ENCODE measurements at regions of chr1 and their contacts with region 1.

Region 1: DNA sequence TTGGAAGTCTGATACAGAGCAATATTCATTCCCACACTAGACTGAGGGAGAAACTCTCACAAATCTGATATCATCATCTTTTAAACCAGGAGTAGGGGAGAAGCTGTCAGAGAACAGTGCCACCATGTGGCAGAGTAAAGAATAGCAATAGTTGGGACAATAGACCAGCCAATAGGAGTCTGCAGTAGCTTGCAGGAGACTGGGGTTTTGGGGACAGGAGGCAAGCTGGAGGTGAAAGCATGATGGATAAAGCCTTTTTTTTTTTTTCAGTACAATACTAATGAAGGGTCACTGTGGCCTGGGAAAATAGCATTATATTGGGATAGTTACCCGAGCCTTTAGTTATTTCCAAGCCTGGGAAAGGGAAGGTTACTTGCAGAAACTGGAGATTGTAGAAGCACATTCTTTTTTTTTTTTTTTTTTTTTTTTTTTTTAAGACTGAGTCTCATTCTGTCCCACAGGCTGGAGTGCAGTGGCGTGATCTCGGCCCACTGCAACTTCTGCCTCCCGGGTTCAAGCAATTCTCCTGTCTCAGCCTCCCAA is 120.7 kb downstream of the S1PR1 start:
- DNase-seq: peak; percentile 52 to 89
- H3K4me3 ChIP-seq: no peak overlapping the region
- H3K27ac ChIP-seq: no peak overlapping the region
- H3K4me1 ChIP-seq: no peaks in the 10 kb centered on the region
- H3K27me3 ChIP-seq: no peaks in the 10 kb centered on the region
- CTCF ChIP-seq: peak in 5 of 7 experiments; percentile 49 to 85 (median 75)
- EP300 ChIP-seq: no peak
- POLR2A ChIP-seq: no peak

Region 2: DNA sequence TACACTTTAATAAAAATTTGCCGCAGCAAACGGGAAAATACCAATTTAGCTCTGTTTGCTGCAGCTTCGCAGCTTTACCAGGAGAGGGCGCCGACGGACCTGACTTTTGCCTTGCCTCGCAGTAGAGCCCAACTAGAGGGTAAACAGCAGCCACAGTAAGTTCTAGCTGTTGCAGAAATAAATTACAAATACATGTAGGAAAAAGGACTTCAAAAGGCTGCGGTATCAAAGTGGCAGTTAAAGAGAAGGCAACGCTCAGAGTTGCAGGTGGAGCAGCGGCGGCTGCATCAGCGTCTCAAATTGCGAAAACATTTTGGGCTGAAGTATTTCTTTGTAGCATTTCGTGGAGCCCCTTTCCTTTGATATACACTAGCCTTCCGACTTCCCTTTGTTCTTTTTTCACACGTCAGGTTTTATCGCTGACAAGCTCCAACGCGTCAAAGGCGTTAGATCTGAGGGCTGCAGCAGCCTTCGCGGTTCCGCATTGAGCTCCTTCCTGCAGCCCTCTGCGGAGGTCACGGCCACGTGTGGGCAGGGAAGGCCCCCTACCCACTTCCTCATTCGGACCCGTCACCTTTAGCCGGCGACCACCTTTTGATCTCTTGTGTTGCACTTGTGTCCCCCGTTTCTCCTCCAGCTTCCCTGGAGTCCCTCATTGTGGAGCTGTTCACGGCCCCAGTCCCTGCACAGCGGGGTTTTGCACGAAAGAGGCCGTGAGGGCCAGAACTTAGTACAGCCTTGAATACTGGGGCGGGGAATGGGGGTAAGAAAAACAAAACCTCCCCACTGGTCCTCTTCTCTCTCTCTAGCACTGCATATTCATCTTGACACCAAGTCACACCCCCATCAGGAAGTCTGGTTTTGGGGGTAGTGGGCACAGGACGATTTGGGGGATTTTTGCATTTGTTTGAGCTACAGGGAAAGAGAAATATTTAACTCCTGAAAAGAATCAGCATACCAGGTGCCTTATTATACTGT is 47.9 kb before region 1 on chr1:
- intact Hi-C with region 1: loop called (anchors 5 kb)
- DNase-seq: peak; percentile 60 to 88
- H3K4me3 ChIP-seq: peak overlapping the region; percentile 29 to 48 (median 36)
- H3K27ac ChIP-seq: peak overlapping the region in 2 of 5 donors; percentile 6 to 43
- H3K4me1 ChIP-seq: peaks cover 4 to 17% (median 11%) of the 10 kb centered on the region in 4 donors
- H3K27me3 ChIP-seq: no peaks in the 10 kb centered on the region
- CTCF ChIP-seq: peak in 5 of 7 experiments; percentile 29 to 77 (median 74)
- EP300 ChIP-seq: no peak
- POLR2A ChIP-seq: no peak

Region 3: GRCh38 chr1:101453844-101454243 is 96.3 kb after region 1 on chr1:
- intact Hi-C with region 1: no loop called
- DNase-seq: no peak
- H3K4me3 ChIP-seq: no peak overlapping the region
- H3K27ac ChIP-seq: no peak overlapping the region
- H3K4me1 ChIP-seq: no peaks in the 10 kb centered on the region
- H3K27me3 ChIP-seq: no peaks in the 10 kb centered on the region
- CTCF ChIP-seq: no peak
- EP300 ChIP-seq: no peak
- POLR2A ChIP-seq: no peak

Region 4: DNA sequence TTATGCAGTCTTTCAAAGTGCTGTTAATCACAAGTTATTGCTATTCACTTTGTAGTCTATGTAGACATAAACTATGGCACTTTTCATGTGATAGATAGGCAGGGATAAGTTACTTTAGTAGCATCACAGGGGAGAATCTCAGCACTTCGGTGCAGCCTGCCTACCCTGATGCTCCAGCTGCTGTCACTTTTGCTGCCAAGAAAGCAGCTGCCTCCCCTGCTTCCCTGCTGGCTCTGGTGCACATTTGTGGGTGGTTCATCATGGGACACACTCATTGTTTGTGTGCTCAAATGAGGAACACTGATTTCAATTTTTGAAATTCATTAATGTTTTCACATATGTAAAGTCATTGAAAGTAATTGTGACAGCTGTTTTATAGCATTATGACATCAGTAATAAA is 151.9 kb after region 1 on chr1:
- intact Hi-C with region 1: no loop called
- DNase-seq: peak in 1 of 2 donors; percentile 18
- H3K4me3 ChIP-seq: no peak overlapping the region
- H3K27ac ChIP-seq: no peak overlapping the region
- H3K4me1 ChIP-seq: no peaks in the 10 kb centered on the region
- H3K27me3 ChIP-seq: no peaks in the 10 kb centered on the region
- CTCF ChIP-seq: no peak
- EP300 ChIP-seq: no peak
- POLR2A ChIP-seq: no peak